ENCODE measurements at regions of chr10 and their contacts with region 1.

Region 1: DNA sequence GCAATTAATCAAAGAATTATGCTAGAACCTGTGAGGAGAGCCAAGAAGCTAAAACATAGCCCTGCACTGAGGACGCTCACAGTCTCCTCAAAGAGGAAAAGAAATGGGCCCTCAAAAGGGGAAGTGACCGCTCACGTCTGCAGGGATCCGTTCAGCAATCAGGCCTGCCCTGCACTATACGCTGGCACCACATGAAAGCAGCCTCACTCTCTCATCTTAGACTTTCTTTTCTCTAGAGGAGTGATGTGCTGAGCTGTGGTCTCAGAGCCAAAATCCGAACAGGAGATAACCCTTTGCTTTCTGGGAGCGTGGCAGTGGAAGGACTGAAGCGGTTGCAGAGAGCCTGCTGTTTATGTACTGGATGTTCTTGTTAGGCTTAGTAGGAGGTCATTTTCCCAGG is 6.3 kb upstream of the IL2RA start:
- DNase-seq: no peak
- ATAC-seq: peak; percentile 78
- H3K4me3 Mint-ChIP-seq: peak overlapping the region; percentile 85
- H3K27ac Mint-ChIP-seq: peak overlapping the region; percentile 93
- H3K4me1 Mint-ChIP-seq: peaks cover 93% of the 10 kb centered on the region
- H3K27me3 Mint-ChIP-seq: no peaks in the 10 kb centered on the region

Region 2: DNA sequence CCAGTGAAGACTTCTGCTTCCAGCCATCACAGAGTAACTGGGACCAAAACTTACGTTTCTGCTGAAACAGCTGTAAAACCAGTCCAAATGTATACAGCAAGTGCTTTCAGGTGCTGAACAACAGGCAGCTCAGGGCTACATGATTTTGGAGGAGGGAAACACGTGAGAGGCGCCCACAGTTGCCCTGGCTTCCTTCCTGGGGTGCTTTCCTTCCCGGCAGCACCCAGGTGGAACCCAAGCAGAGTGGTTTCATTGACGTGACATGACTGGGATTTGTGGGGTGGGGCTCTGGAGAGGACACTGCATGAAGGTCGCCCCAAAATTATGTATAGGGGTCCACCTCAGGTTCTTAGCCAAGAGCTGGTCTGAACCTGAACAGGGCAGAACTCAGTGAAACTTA is 40.5 kb before region 1 on chr10:
- POLR2A ChIA-PET with region 1: no interaction called
- DNase-seq: no peak
- ATAC-seq: peak; percentile 15
- H3K4me3 Mint-ChIP-seq: no peak overlapping the region
- H3K27ac Mint-ChIP-seq: peak overlapping the region; percentile 25
- H3K4me1 Mint-ChIP-seq: peaks cover 36% of the 10 kb centered on the region
- H3K27me3 Mint-ChIP-seq: no peaks in the 10 kb centered on the region

Region 3: DNA sequence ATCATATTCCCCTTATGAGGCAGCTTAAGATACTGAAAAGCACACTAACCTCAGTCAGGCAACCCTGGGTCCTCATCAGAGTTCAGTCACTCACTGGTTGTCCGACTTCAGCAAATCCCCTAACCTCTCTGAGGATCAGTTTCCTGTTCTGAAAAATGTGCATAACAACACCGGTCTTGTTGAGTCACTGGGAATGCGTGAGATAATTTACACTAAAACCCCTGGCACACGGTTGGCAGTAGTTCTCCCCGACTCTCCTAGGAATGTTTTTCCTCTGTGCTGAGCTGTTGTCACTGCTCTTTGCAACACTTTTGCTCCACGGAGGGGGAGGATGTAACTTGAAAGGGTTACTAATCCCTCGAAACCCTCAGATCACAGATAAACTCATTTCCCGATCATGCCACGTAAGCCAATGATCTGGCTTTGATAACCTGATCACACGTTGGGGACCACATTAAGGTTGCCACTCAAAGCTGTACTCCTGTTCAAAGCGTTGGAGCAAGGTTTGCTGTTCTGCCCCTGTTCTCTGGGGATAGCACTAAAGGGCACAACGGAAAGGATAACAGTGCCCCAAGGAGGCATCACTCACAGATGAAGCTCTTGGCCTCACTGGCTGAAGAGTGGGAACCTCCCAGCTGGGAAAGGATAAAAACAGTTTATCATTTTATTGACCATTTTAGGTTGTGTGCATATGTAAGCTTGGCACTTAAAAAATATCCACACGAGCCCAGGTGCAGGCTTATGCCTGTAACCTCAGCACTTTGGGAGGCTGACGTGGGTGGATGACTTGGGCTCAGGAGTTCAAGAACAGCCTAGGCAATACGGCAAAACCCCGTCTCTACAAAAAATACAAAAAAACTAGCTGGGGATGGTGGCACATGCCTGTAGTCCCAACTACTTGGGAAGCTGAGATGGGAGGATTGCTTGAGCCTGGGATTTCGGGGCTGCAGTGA is 15.4 kb after region 1 on chr10:
- POLR2A ChIA-PET with region 1: interaction called, 49 read pairs
- DNase-seq: no peak
- ATAC-seq: peak; percentile 60
- H3K4me3 Mint-ChIP-seq: peak overlapping the region; percentile 79
- H3K27ac Mint-ChIP-seq: peak overlapping the region; percentile 89
- H3K4me1 Mint-ChIP-seq: peaks cover 56% of the 10 kb centered on the region
- H3K27me3 Mint-ChIP-seq: no peaks in the 10 kb centered on the region

Region 4: DNA sequence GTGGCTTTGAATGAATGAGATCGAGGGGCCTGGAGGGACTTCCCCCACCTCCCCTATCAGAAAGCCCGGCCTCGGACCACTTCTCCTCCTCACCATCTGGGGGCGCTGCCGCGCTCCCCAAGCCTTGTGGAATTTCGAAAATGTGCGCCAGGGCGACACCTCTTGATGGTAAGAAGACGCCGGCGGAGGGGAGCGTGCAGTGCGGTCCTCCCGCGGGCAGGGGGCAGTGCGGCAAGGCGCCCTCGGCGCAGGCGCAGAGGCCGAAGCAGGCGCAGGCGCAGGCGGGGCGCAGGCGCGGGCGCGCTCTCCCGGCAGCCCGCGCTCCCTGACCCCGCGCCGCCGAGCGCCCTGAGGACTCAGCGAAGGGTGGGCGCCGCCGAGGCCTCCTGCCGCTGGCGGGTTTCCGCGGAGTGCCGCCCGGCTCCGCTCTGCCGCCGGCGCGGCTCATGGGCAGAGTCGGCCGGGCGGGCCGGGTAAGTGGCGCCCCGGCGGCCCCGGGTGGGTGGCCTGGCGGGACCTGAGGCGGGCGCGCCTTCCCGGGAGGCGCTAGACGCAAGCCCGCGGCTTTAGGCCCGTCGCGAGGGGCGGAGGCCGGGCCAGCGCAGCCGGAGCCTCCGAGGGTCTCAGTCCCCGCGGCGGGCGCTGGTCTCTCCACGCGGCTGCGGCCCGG is 20.4 kb after region 1 on chr10 and contains the start of gene RBM17:
- POLR2A ChIA-PET with region 1: interaction called, 49 read pairs
- DNase-seq: peak; percentile 100
- ATAC-seq: peak; percentile 84
- H3K4me3 Mint-ChIP-seq: peak within 1 kb of the TSS; percentile 94
- H3K27ac Mint-ChIP-seq: peak within 1 kb of the TSS; percentile 93
- H3K4me1 Mint-ChIP-seq: peaks cover 61% of the 10 kb centered on the region
- H3K27me3 Mint-ChIP-seq: no peaks in the 10 kb centered on the region
- total RNA-seq, gene RBM17: 185 to 200 TPM

Measured in activated naive CD8-positive, alpha-beta T cell treated with anti-CD3 and anti-CD28 coated beads, Interleukin-2, amount 10 ng/mL, durations not matched to agents 7 days and 5 days (primary cell).